Activated naive CD4-positive, alpha-beta T cell treated with anti-CD3 and anti-CD28 coated beads for 36 hours (primary cell): ENCODE measurements at regions of chr3 and their contacts with region 1.

Region 1: DNA sequence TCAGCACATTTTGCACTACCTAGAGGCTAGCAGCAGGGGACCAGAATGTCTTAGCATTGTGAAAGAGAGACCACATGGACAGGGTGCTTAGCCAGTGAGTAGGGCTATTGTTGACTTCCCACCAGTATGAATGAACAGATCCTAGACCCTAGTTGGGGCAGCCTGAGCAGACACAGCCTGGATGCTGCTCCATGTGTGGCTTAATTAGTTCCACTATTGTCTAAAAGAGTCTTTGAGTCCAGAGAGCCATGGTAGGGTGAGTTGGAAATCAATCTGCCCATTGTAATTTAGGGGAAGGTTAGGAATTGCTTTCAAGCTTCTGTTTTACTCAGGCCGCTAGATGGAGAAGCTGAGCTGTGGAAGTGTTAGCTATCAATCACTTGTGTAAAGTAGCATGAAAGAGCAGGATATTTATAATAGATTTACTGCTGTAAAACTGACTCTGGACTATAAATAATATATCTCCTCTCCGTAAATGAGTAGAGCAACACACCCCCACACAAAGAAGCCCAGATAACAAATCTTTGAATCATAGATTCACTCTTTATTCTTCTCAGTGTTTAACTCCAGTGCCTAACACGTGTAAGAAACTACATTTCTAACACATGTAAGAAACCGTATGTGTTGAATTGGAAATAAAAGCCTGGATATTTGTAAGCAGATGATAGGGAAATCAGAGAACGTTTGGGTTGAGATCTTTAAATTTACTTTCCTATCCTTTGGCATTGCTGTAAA is 4.1 kb upstream of the GCSAM start:
- DNase-seq: peak; percentile 81
- H3K4me3 Mint-ChIP-seq: no peak overlapping the region
- H3K27ac Mint-ChIP-seq: no peak overlapping the region
- H3K4me1 Mint-ChIP-seq: peaks cover 64% of the 10 kb centered on the region
- H3K27me3 Mint-ChIP-seq: no peaks in the 10 kb centered on the region

Region 2: DNA sequence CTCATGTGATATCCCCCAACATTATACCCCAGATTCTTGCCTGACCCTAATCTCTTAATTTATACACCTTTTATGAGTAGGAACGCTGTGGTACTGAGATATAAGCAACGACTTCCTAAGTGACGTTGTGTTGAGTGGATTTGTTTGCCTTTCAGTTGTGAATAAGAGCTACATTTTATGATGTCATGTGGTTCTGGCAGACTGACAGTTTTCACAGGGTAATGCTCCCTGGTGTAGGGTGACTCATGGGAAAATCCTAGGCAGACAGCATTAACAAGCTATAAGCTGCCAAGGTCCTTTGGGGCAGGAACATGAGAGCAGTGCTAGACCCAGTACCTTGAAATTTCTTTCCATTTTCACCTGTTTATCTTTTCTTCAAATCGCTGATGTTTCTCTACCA is 39.7 kb before region 1 on chr3:
- CTCF ChIA-PET with region 1: interaction called, 3 read pairs
- intact Hi-C with region 1: loop called (anchors 2 kb)
- DNase-seq: peak; percentile 71
- H3K4me3 Mint-ChIP-seq: no peak overlapping the region
- H3K27ac Mint-ChIP-seq: no peak overlapping the region
- H3K4me1 Mint-ChIP-seq: peaks cover 23% of the 10 kb centered on the region
- H3K27me3 Mint-ChIP-seq: no peaks in the 10 kb centered on the region

Region 3: DNA sequence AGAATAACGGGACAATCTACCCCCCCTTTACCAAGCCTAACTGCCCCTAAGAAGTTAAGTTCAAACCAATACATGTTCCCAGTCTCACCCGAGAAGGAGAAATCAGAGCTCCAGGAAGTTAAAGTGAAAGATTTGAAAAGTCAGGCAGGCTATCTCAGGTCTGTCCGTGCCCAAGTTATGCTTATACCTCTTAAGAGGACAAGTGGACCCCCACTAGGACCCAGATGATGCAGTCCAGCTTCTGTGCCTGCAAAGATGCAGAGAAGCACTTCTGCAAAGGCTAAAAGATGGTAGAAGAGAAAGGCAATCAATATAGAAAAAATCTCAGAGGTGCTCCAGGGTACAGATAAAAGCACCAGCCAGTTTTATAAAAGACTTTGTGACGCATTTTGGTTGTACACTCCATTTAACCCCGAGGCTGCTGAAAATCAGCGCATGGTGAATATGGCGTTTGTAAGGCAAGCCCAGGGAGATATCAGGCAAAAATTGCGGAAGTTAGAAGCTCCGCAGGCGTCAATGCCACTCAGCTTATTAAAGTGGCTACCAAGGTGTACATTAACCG is 166.7 kb after region 1 on chr3:
- CTCF ChIA-PET with region 1: interaction called, 15 read pairs
- intact Hi-C with region 1: no loop called
- DNase-seq: peak; percentile 52
- H3K4me3 Mint-ChIP-seq: no peak overlapping the region
- H3K27ac Mint-ChIP-seq: no peak overlapping the region
- H3K4me1 Mint-ChIP-seq: no peaks in the 10 kb centered on the region
- H3K27me3 Mint-ChIP-seq: no peaks in the 10 kb centered on the region

Region 4: DNA sequence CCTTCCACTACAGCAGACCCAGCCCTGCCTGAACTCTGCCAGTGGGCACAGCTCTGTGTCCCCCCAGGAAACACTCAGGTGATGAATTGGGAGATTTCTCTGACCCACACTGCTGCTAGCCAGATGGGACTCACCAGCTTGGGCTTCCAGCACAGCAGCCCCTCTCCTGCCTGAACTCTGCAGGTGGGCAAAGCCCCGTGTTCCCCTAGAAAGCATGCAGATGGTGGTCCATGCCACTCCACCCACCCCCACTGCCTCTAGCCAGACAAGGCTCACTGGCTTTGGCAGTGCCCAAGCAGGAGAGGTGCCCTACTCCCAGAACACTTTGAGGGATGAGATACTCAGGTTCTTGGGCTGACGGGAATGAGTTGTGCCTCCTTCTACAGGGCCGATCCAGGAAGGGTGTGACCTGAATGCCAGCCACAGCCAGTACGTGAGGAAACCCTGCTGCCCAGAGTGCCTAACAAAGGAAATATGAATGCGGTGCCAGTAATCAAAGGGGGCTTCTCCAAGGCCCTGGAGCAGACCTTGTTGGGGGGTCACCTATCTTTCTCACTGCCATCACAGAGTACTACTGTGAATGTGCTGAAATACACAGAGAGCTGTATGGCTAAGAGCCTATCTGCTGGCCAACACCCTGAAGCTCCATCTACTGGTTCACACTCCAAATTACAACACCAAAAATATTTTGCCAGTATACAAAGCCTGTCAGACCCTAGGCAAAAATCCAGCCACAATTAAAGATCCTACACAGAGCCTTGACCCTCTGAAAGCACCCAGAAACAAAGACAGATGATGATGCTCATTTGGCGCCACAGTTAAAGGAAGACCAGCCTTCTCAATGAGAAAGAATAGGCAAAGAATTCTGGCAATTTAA is 300.3 kb after region 1 on chr3:
- CTCF ChIA-PET with region 1: interaction called, 4 read pairs
- intact Hi-C with region 1: loop called (anchors 1 kb)
- DNase-seq: peak; percentile 20
- H3K4me3 Mint-ChIP-seq: no peak overlapping the region
- H3K27ac Mint-ChIP-seq: peak overlapping the region; percentile 62
- H3K4me1 Mint-ChIP-seq: peaks cover 52% of the 10 kb centered on the region
- H3K27me3 Mint-ChIP-seq: no peaks in the 10 kb centered on the region

Region 5: GRCh38 chr3:112531358-112531781 is 394.2 kb after region 1 on chr3:
- CTCF ChIA-PET with region 1: interaction called, 5 read pairs
- intact Hi-C with region 1: loop called (anchors 2 kb)
- DNase-seq: no peak
- H3K4me3 Mint-ChIP-seq: no peak overlapping the region
- H3K27ac Mint-ChIP-seq: peak overlapping the region; percentile 62
- H3K4me1 Mint-ChIP-seq: peaks cover 11% of the 10 kb centered on the region
- H3K27me3 Mint-ChIP-seq: no peaks in the 10 kb centered on the region